Activated CD8-positive, alpha-beta memory T cell treated with anti-CD3 and anti-CD28 coated beads, Interleukin-2, amount 10 ng/mL, durations not matched to agents 7 days and 5 days (primary cell): ENCODE measurements at regions of chr15 and their contacts with region 1.

Region 1: GRCh38 chr15:77633134-77633912 is 611 bp upstream of the LINGO1 start:
- DNase-seq: peak; percentile 74
- ATAC-seq: peak; percentile 88
- H3K4me3 Mint-ChIP-seq: no peak overlapping the region
- H3K27ac Mint-ChIP-seq: no peak overlapping the region
- H3K4me1 Mint-ChIP-seq: peaks cover 9% of the 10 kb centered on the region
- H3K27me3 Mint-ChIP-seq: peaks cover 69% of the 10 kb centered on the region

Region 2: DNA sequence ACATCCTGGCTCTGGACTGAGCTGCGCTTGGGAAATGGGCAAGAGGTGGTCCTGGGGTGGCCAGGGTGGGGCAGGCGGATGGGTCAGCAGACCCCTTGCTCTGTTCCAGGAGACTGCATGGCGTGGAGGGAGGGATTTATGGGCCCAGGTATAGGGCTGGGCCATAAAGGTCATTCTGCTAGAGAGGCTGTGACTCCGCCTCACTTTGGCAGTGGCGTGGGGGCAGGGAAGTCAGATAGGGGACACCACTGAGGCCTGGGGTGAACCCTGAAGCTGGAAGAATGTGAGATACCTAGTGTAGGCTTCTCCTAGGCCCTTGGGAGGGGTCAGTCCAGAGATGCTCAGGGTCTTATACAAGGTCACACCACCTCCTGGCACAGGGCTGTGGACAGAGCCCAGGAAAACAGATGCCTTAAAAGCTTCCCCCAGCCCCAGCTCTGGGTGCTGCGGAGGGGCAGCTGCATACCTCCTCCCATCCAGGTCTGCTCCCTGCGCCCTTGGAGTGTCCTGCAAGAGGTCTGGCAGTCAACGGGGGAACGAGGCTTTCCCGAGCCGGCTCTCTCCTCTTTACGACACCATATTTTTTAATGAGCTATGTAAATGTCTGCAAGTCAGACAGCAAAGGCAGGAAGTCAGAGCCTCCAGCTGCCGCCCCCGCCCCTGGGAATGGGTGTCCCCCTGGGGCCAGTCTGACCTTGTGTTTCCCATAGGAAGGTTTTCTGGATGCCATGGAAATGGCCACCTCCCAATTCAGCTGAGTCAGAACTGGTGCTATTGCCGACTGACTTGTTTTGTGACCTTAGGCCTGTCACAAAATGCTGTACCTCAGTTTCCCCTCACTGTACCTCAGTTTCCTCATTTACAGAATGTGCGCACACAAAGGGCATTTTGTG is 26.9 kb before region 1 on chr15:
- CTCF ChIA-PET with region 1: interaction called, 10 read pairs
- DNase-seq: no peak
- ATAC-seq: no peak
- H3K4me3 Mint-ChIP-seq: no peak overlapping the region
- H3K27ac Mint-ChIP-seq: no peak overlapping the region
- H3K4me1 Mint-ChIP-seq: peaks cover 4% of the 10 kb centered on the region
- H3K27me3 Mint-ChIP-seq: peaks cover 12% of the 10 kb centered on the region

Region 3: GRCh38 chr15:77617476-77618230 is 15.7 kb before region 1 on chr15:
- CTCF ChIA-PET with region 1: interaction called, 17 read pairs
- DNase-seq: no peak
- ATAC-seq: no peak
- H3K4me3 Mint-ChIP-seq: no peak overlapping the region
- H3K27ac Mint-ChIP-seq: no peak overlapping the region
- H3K4me1 Mint-ChIP-seq: no peaks in the 10 kb centered on the region
- H3K27me3 Mint-ChIP-seq: no peaks in the 10 kb centered on the region

Region 4: DNA sequence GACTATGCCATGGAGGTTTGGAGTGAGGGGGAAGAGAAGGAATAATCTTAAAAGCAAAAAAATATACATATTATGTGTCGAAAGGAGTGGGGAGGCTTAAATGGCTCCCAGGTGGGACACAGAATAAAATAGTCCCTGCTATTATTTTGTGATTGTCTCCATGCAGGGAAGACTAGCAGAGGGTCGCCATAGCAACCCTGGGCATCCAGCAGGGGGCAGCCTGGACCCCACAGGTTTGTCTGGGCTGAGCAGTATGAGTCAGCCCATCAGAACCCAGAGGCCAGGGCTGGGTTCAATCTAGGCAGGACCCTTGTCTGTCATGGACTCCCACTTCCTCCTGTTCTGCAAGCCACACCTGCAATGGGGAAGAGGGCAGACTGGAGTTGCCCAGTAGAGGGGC is 16.9 kb after region 1 on chr15:
- CTCF ChIA-PET with region 1: interaction called, 33 read pairs
- DNase-seq: peak; percentile 43
- ATAC-seq: peak; percentile 23
- H3K4me3 Mint-ChIP-seq: no peak overlapping the region
- H3K27ac Mint-ChIP-seq: no peak overlapping the region
- H3K4me1 Mint-ChIP-seq: no peaks in the 10 kb centered on the region
- H3K27me3 Mint-ChIP-seq: peaks cover 20% of the 10 kb centered on the region

Region 5: DNA sequence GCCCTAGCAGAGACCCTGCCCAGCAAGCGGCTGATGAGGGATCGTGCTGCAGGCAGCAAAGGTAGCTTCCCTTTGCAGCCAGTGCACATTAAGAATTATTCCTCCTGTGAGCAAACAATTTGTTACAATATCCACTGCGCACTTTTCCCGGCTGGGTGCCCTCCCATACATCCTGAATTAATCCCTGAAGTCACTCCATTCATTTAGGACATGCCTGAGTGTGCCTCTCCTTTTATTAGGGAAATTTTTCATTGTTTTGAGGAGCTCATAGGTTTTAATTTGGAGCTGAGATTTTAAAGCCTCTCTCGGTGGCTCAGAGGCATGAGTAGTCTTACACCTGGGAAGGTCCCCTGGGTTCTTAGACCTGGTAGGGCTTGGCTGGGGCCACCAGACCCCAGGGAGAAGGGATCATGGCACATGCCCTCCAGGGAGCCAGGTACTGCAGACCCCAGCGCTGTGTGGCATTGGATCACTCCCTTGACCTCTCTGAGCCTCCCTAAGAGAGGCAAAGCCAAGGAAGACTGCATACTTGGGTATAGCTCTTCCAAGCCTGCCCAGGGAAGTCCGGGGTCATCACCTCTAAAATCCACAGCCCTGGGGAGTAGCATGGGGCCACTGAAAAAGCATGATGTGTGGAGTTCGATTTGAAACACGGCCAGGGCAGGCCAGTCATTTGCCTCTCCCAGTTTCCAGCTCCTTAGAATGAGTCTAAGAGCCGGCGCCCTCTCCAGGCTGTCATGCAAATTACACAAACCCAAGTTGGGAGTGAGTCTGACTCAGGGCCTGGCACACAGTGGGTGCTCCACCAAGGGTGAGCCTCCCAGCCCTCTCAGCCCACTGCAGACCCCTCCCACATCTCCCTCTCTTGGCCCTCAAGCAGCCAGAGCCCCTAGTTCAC is 151.3 kb after region 1 on chr15:
- CTCF ChIA-PET with region 1: interaction called, 10 read pairs
- DNase-seq: no peak
- ATAC-seq: peak; percentile 53
- H3K4me3 Mint-ChIP-seq: no peak overlapping the region
- H3K27ac Mint-ChIP-seq: no peak overlapping the region
- H3K4me1 Mint-ChIP-seq: no peaks in the 10 kb centered on the region
- H3K27me3 Mint-ChIP-seq: no peaks in the 10 kb centered on the region

Region 6: GRCh38 chr15:77821188-77821958 is 188.1 kb after region 1 on chr15:
- CTCF ChIA-PET with region 1: interaction called, 39 read pairs
- DNase-seq: peak; percentile 61
- ATAC-seq: peak; percentile 57
- H3K4me3 Mint-ChIP-seq: no peak overlapping the region
- H3K27ac Mint-ChIP-seq: no peak overlapping the region
- H3K4me1 Mint-ChIP-seq: peaks cover 2% of the 10 kb centered on the region
- H3K27me3 Mint-ChIP-seq: peaks cover 45% of the 10 kb centered on the region

Region 7: GRCh38 chr15:78034495-78035191 is 401.3 kb after region 1 on chr15:
- CTCF ChIA-PET with region 1: no interaction called
- DNase-seq: peak; percentile 95
- ATAC-seq: peak; percentile 80
- H3K4me3 Mint-ChIP-seq: peak overlapping the region; percentile 46
- H3K27ac Mint-ChIP-seq: peak overlapping the region; percentile 92
- H3K4me1 Mint-ChIP-seq: peaks cover 92% of the 10 kb centered on the region
- H3K27me3 Mint-ChIP-seq: no peaks in the 10 kb centered on the region